HEK293 (cell line): ENCODE measurements at regions of chr10 and their contacts with region 1.

Region 1: DNA sequence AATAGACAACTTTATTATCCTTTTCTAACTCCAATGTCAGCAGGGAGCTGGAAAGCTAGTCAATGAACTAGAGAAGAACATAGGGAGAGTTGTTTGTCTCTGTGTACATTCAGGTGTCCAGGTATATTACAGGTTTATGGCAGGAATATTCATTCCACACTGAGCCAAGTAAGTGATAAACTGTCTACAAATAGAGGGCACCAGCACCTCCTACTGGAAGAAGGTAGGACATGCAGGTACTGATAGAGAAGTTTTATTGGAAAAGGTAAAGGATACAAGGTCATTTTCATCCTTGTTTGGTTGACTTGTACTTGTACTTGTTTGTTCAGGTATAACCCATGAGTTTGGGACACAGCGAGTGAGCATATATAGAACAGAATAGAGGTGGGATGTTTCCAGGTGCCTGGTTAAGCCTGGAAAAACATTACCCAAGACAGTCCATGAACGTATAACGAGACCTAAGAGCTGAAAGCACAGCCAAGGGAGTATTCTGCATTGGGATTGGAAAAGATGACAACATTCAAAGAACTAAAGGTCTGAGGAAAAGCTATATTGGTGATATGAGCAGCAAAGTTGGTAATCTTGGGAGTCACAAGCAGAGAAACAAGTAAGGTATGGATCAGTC is 61.4 kb upstream of the PPP1R3C start:
- H3K4me3 ChIP-seq: no peak overlapping the region
- H3K27ac ChIP-seq: no peak overlapping the region
- H3K4me1 ChIP-seq: no peaks in the 10 kb centered on the region
- CTCF ChIP-seq: 0 out of 2 replicates have a peak, but pooled peaks have one; percentile 16

Region 2: DNA sequence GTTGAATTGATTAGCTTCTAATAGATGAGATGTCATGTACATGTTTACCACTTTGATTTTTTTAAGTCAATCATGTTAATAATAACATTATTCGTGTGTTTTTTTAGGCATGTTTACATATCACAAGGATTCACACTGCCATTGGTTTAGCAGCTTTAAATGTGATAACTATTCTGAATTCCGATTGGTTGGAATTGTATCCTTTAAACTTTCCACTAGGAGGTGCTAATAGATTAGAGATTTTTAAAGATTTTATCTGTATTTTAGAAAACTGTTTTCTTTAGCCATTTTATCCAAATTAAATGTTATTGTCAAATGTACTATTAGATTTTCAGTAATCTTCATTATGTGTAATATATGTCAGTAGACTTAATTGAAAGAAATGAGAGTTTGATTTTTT is 201.0 kb before region 1 on chr10:
- CTCF ChIA-PET with region 1: interaction called, 11 read pairs
- POLR2A ChIA-PET with region 1: no interaction called
- H3K4me3 ChIP-seq: no peak overlapping the region
- H3K27ac ChIP-seq: no peak overlapping the region
- H3K4me1 ChIP-seq: no peaks in the 10 kb centered on the region
- CTCF ChIP-seq: no peak

Region 3: DNA sequence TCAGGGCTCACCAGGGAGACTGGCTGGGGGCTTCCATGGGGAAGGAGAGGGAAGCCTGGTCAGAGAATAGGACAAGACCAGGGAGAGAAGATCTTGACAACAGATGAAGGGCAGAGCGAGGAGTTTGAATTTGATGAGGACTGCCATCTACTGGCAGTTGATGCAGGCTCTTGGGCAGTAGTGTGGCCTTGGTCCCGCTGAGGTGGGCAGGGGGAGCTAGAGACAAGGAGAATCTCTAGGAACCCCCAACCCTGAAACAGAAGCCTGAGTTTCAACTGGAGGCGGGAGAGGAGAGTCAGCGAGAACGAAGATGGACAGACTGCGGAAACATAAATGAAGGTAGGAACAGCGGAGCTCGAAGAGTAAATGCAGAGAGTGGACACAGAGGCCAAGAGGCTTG is 142.4 kb before region 1 on chr10:
- CTCF ChIA-PET with region 1: interaction called, 23 read pairs
- POLR2A ChIA-PET with region 1: no interaction called
- H3K4me3 ChIP-seq: no peak overlapping the region
- H3K27ac ChIP-seq: no peak overlapping the region
- H3K4me1 ChIP-seq: no peaks in the 10 kb centered on the region
- CTCF ChIP-seq: peak; percentile 92

Region 4: GRCh38 chr10:91621483-91622113 is 72.7 kb before region 1 on chr10:
- CTCF ChIA-PET with region 1: no interaction called
- POLR2A ChIA-PET with region 1: no interaction called
- H3K4me3 ChIP-seq: no peak overlapping the region
- H3K27ac ChIP-seq: no peak overlapping the region
- H3K4me1 ChIP-seq: no peaks in the 10 kb centered on the region
- CTCF ChIP-seq: no peak

Region 5: GRCh38 chr10:91643700-91644099 is 50.6 kb before region 1 on chr10:
- CTCF ChIA-PET with region 1: interaction called, 13 read pairs
- POLR2A ChIA-PET with region 1: no interaction called
- H3K4me3 ChIP-seq: no peak overlapping the region
- H3K27ac ChIP-seq: no peak overlapping the region
- H3K4me1 ChIP-seq: no peaks in the 10 kb centered on the region
- CTCF ChIP-seq: 0 out of 2 replicates have a peak, but pooled peaks have one; percentile 12

Region 6: GRCh38 chr10:91672021-91672608 is 22.2 kb before region 1 on chr10:
- CTCF ChIA-PET with region 1: interaction called, 15 read pairs
- POLR2A ChIA-PET with region 1: no interaction called
- H3K4me3 ChIP-seq: no peak overlapping the region
- H3K27ac ChIP-seq: peak overlapping the region; percentile 67
- H3K4me1 ChIP-seq: peaks cover 11% of the 10 kb centered on the region; the same call in 1 of the 2 replicates
- CTCF ChIP-seq: no peak

Region 7: DNA sequence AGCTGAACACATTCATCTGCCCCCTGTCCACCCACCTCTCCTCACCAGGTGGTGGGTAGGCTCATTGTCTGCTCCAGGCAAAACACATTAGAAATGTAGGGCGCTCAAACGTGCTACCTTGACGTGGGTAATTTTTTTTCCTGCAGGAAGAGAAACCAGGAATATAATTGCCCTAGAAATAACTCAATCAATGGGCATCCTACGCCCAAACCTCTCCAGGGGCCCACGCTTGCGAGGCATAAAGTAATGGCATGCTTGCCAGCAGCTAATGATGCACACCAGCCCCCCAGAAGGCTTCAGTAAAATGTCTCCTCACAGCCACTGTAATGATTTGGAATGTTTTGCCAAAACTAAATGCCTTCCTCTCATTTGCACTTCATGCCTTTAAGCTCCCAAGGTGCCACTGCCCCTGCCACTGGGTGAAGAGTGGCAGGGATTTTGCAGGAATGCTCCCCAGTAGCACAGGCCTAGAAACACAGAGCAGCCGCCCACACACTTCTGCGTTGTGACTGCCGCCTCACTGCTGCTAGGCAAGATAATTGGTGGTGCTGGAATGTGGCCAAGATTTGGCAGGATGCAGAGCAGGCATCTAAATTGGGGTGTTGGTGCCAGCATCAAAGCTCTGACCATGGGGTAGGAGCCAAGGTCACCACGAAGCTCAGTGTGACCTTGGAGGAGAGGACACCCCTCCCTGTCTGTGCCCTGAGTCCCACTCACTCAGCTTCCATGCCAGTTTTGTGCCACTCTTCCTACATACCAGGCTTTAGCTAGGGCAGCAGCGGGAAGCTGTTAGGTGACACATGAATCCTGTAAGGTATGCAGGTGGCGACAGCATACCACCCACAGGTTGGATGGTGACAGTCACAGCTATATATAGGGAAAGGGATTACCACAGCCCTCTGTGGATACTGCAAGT is 12.7 kb before region 1 on chr10:
- CTCF ChIA-PET with region 1: interaction called, 15 read pairs
- POLR2A ChIA-PET with region 1: no interaction called
- H3K4me3 ChIP-seq: no peak overlapping the region
- H3K27ac ChIP-seq: no peak overlapping the region
- H3K4me1 ChIP-seq: peaks cover 6% of the 10 kb centered on the region; the same call in 1 of the 2 replicates
- CTCF ChIP-seq: no peak

Region 8: DNA sequence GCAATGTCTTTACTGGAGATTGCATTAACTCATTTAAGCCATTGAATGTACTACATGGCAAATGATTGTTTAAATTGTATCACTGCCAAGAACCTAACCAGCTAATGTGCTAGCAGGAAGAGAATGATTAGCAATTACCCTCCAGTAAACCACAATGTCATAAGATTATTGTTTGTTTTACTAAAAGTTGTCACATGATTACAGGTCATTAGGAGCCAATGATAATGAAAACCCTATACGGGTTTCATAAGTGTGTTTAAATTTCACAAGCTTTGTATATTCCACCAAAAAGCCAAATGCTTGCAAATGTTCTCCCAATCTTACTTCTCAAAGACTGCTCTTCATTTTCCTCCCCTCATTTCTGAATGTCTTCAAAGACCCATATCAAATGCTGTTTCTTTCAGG is 15.1 kb after region 1 on chr10:
- CTCF ChIA-PET with region 1: interaction called, 17 read pairs
- POLR2A ChIA-PET with region 1: no interaction called
- H3K4me3 ChIP-seq: no peak overlapping the region
- H3K27ac ChIP-seq: 0 out of 2 replicates have a peak overlapping the region, but pooled peaks have one; percentile 1
- H3K4me1 ChIP-seq: peaks cover 15% of the 10 kb centered on the region
- CTCF ChIP-seq: no peak

Region 9: DNA sequence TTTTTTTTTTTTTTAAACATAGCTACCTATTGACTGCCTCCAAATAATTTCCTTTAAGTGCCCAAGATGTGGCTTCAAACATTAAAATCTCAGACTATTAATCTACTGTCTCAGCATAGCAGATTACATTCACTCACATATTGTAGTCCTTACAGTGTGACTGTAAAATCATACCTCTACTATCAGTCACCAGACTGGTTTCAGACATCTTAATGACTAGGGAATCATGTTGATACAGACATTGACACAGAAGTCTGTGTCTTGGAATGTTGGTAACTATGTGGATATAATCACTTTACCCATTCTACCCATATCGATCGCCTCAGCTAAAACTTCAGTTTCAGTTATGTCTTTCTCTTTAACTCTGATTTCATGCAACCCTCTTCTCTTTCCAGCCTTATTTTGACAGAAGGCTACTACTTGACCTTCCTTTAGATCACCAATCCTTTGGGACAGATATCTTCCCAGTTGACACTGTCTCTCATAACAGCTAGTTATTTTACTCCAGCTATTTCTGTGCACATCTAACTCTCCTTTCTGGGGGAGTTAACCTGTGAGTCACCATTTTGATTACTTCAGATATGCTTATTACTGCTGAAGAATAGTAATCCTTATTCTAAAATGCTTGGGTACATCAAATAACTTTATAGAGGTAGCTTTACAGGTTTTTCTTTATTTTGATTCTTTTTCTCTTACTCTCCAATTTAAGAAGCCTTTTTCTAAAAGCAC is 111.0 kb after region 1 on chr10:
- CTCF ChIA-PET with region 1: no interaction called
- POLR2A ChIA-PET with region 1: no interaction called
- H3K4me3 ChIP-seq: no peak overlapping the region
- H3K27ac ChIP-seq: no peak overlapping the region
- H3K4me1 ChIP-seq: peaks cover 2% of the 10 kb centered on the region; the same call in 1 of the 2 replicates
- CTCF ChIP-seq: no peak